Posterior cingulate gyrus (tissue), 11 donors: ENCODE measurements at regions of chr20 and their contacts with region 1.

Region 1: GRCh38 chr20:35664544-35665221 is at the starts of genes CPNE1 and RBM12:
- DNase-seq: peak; percentile 90 to 99 (median 93)

Region 2: DNA sequence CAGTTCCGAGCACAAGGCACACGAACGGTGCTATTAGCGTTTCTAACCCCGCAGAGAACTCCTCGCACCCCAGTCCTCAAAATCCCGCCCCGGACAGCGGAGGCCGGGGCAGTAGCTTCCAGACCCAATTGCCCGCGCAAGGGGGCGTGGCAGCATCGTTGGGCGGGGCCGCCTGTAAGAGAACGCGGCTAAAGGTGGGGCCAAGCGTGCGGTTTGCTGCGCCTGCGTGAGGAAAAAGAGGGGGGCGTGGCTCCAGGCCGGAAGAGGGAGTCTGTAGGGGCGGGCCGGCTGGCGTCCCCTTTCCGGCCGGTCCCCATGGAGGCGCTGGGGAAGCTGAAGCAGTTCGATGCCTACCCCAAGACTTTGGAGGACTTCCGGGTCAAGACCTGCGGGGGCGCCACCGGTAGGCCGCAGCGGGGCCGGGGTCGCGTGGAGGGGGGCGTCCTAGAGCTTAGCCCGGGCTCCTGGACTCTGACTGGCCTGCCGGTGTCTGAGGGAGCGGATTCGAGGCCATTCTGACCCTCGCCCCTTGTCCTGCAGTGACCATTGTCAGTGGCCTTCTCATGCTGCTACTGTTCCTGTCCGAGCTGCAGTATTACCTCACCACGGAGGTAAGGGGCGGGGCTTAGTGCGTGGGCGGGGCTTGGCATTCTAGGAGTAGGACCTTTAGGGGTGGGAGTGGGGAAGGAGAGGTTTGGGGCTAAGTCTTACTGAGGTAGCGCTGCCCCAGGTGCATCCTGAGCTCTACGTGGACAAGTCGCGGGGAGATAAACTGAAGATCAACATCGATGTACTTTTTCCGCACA is 122.7 kb before region 1 on chr20 and contains the start of gene ERGIC3:
- intact Hi-C with region 1: loop called (anchors 5 kb)
- DNase-seq: peak; percentile 90 to 99 (median 95)

Region 3: DNA sequence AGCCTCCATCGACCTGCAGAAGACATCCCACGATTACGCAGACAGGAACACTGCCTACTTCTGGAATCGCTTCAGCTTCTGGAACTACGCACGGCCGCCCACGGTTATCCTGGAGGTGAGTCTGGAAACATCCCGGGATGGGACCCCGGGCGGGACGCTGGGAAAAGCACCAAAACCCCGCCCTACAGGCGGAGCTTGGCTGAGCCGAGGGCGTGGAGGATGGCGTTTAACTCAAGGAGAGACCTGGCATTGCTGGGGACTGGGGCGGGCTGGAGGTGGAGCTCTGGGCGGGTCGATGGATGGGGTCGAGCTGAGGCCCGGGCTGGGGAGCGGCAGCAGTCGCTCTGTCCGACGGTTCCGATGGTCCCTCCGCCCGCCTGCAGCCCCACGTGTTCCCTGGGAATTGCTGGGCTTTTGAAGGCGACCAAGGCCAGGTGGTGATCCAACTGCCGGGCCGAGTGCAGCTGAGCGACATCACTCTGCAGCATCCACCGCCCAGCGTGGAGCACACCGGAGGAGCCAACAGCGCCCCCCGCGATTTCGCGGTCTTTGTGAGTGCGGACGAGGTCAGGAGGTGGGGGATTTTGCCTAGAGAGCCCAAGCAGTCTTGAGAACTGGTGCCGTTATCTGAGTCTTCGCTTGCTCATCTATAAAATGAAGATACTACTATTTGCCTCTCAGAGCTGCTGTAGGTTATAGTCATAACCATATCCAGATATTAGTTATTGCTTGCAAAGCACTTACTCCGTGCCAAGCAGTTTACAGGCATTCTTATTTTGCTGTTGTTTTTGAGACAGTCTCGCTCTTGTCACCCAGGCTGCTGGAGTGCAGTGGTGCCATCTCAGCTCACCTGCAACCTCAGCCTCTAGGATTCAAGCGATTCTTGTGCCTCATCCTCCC is 45.2 kb before region 1 on chr20:
- intact Hi-C with region 1: loop called (anchors 5 kb)
- DNase-seq: peak; percentile 36 to 95 (median 56)

Region 4: DNA sequence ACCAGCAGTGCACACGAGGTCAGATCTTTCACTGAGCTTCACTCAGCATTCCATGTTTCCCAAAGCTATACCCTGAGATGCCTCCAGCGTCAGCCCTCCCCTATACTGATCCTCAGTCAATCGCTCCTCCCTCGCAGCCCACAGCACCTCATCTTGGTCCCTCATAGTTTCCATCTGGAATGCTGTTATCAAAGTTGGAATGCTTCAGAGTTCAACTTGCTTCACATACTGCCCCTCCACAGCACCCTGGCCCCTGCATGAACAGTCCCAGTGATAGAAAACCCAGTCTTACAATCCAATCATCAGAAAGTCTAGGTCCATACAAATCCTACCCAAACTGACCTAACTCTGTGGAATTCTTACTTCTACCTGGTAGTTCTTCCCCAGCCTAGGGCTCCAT is 29.0 kb before region 1 on chr20:
- intact Hi-C with region 1: no loop called
- DNase-seq: no peak

Region 5: GRCh38 chr20:35821807-35822242 is 157.1 kb after region 1 on chr20:
- intact Hi-C with region 1: no loop called
- DNase-seq: no peak